PC-9 (cell line): ENCODE measurements at regions of chr3 and their contacts with region 1.

Region 1: DNA sequence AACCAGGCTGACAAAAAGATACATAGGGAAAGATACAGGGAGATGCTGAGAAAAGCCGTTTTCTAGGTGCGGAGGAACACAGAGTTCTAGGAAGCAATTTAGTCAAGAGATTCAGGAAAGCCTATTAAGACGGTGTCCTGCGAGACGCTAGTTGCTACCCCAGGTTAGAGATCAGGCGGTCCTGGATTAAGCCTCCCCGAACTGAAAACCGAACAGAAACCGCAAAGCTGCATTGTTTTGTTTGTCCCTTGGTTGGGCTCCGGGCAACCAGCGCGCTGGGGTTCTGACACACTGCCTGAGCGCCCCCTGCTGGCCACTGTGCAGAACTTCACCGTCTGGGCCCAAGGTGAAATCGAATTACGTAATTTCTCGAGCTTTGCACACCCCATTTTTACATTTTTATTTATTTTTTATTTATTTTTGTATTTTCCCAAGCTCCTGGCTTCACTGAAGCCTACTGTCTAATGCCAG is 37.3 kb upstream of the NDUFB4 start:
- DNase-seq: peak; percentile 78 to 87
- H3K4me3 ChIP-seq: peak overlapping the region; percentile 57
- H3K27ac ChIP-seq: no peak overlapping the region
- H3K4me1 ChIP-seq: peaks cover 15% of the 10 kb centered on the region
- H3K27me3 ChIP-seq: no peaks in the 10 kb centered on the region
- CTCF ChIP-seq: peak; percentile 98

Region 2: GRCh38 chr3:120245386-120245785 is 313.4 kb before region 1 on chr3:
- CTCF ChIA-PET with region 1: no interaction called
- POLR2A ChIA-PET with region 1: no interaction called
- intact Hi-C with region 1: loop called (anchors 1 kb)
- DNase-seq: no peak
- H3K4me3 ChIP-seq: no peak overlapping the region
- H3K27ac ChIP-seq: no peak overlapping the region
- H3K4me1 ChIP-seq: no peaks in the 10 kb centered on the region
- H3K27me3 ChIP-seq: no peaks in the 10 kb centered on the region
- CTCF ChIP-seq: no peak

Region 3: DNA sequence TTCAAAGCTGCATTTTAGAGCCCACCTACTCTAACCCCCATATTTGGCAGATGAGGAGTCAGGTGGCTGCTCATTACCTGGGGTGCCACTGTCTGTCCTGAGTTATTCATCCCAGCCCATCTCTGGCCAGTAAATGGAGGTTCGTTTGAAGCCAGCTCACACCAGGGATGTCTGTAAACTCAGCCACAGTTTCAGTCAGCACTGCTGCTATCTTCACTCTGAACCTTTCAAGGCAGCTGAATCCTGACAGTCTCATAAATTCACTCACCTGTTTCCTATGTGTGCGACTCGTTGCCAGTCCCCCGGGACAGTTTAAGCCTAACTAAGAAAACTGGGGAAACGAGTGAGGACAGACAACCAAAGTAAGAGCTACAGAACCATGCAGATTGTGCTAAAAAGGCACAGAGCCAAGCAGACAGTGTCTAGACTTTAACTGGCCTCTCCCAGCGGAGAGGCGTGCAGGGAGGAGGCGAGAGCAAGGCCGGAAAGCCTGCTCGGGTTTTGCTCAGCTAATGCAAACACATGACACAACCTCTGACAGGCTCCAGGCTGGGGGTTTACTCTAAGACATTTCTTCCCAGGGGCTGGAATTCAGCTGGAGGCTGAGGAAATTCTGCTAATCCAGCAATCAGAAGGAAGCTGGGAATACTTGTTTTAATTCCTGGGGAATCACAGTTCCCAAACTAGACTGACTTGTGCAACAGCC is 120.0 kb before region 1 on chr3:
- CTCF ChIA-PET with region 1: no interaction called
- POLR2A ChIA-PET with region 1: interaction called, 5 read pairs
- intact Hi-C with region 1: loop called (anchors 1 kb)
- DNase-seq: no peak
- H3K4me3 ChIP-seq: no peak overlapping the region
- H3K27ac ChIP-seq: no peak overlapping the region
- H3K4me1 ChIP-seq: peaks cover 30% of the 10 kb centered on the region
- H3K27me3 ChIP-seq: no peaks in the 10 kb centered on the region
- CTCF ChIP-seq: no peak

Region 4: DNA sequence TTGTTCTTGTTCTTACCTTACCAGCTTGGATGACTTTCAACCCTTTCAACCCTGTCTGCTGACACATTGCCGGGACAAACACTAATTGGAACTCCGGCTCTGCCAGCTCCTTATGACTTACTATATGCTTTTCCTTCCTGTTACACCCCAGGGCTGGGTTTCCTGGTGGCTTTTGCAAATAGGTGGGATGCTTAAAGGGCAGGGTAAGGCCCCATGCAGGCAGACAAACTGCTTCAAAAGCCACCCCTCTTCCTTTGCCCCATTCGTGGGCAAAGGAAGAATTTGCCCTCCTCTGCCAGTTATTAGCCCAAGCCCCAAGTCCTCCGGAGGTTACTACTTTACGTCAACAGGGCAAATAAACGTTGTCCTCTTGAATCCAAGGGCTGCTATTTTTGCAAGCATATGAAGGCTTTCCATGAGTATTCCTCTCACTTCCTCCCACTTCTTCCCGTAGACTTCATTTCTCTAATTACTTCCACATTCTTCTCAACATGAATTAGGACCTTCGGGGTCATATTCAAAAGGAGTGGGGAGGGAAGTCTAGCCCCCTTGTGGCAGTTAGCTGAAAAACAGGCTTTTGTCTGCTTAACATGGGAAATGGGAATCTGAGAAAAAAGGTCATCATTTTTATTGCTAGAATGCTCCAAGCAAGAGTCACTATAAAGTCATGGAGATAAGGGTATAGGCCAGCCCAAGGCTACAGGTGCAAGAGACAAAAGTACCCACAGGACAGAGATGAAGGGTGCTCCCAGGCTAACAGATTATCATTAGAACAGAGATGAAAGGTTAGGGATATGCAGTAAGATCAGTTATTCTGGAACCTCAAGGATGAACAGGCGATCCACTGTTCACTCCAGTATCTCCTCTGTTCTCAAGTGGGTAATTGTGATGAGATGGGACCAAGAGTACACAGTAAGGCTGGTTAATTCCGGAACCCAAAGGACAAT is 51.7 kb before region 1 on chr3:
- CTCF ChIA-PET with region 1: no interaction called
- POLR2A ChIA-PET with region 1: no interaction called
- intact Hi-C with region 1: loop called (anchors 2 kb)
- DNase-seq: peak; percentile 30 to 47
- H3K4me3 ChIP-seq: no peak overlapping the region
- H3K27ac ChIP-seq: no peak overlapping the region
- H3K4me1 ChIP-seq: peaks cover 9% of the 10 kb centered on the region
- H3K27me3 ChIP-seq: no peaks in the 10 kb centered on the region
- CTCF ChIP-seq: peak; percentile 76

Region 5: GRCh38 chr3:121152573-121152972 is 593.8 kb after region 1 on chr3:
- CTCF ChIA-PET with region 1: no interaction called
- POLR2A ChIA-PET with region 1: no interaction called
- intact Hi-C with region 1: loop called (anchors 2 kb)
- DNase-seq: no peak
- H3K4me3 ChIP-seq: no peak overlapping the region
- H3K27ac ChIP-seq: no peak overlapping the region
- H3K4me1 ChIP-seq: no peaks in the 10 kb centered on the region
- H3K27me3 ChIP-seq: no peaks in the 10 kb centered on the region
- CTCF ChIP-seq: peak; percentile 36; the same call in 1 of the 2 replicates